ENCODE measurements at regions of chr5 and their contacts with region 1.

Region 1: GRCh38 chr5:90873033-90873517 is 314.5 kb downstream of the ADGRV1 start:
- DNase-seq: peak in 7 of 9 donors; percentile 43 to 77 (median 61)
- ATAC-seq: peak; percentile 75
- H3K4me3 ChIP-seq: no peak overlapping the region
- H3K4me3 Mint-ChIP-seq: peak overlapping the region in 9 of 10 donors; percentile 21 to 75 (median 55)
- H3K27ac ChIP-seq: peak overlapping the region; percentile 20
- H3K27ac Mint-ChIP-seq: peak overlapping the region in 8 of 9 donors; percentile 44 to 87 (median 72)
- H3K4me1 ChIP-seq: peaks cover 0 to 22% of the 10 kb centered on the region in 2 donors
- H3K4me1 Mint-ChIP-seq: peaks cover 6 to 49% (median 34%) of the 10 kb centered on the region in 7 donors
- H3K27me3 ChIP-seq: no peaks in the 10 kb centered on the region
- H3K27me3 Mint-ChIP-seq: peaks cover 0 to 41% (median 12%) of the 10 kb centered on the region in 5 donors

Region 2: GRCh38 chr5:91408710-91409109 is 535.6 kb after region 1 on chr5:
- CTCF ChIA-PET with region 1: no interaction called
- POLR2A ChIA-PET with region 1: no interaction called
- intact Hi-C with region 1: loop called in 1 of 2 experiments (anchors 5 kb)
- DNase-seq: no peak
- ATAC-seq: no peak
- H3K4me3 ChIP-seq: no peak overlapping the region
- H3K4me3 Mint-ChIP-seq: no peak overlapping the region
- H3K27ac ChIP-seq: no peak overlapping the region
- H3K27ac Mint-ChIP-seq: no peak overlapping the region
- H3K4me1 ChIP-seq: no peaks in the 10 kb centered on the region
- H3K4me1 Mint-ChIP-seq: peaks cover 0 to 4% (median 0%) of the 10 kb centered on the region in 7 donors
- H3K27me3 ChIP-seq: no peaks in the 10 kb centered on the region
- H3K27me3 Mint-ChIP-seq: no peaks in the 10 kb centered on the region

Region 3: DNA sequence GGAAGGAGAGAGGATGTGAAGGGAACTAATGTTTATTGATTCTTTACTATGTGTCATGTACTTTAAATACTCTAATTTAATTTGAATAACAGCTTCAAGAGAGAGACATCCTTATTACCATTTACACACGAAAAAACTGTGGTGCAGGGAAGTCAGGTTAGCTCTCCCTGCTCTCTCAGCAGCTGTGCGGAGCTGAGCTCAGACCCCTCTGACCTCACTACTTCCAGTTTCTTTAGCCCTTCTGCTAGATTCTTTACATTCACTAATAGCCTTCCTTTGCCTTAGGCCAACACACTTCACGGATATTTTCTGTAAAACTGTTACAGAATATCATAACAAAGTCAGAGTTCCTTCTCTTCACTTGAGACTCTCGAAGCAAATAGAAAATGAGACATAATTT is 641.3 kb after region 1 on chr5:
- CTCF ChIA-PET with region 1: no interaction called
- POLR2A ChIA-PET with region 1: no interaction called
- intact Hi-C with region 1: no loop called
- DNase-seq: no peak
- ATAC-seq: no peak
- H3K4me3 ChIP-seq: no peak overlapping the region
- H3K4me3 Mint-ChIP-seq: no peak overlapping the region
- H3K27ac ChIP-seq: no peak overlapping the region
- H3K27ac Mint-ChIP-seq: peak overlapping the region in 1 of 9 donors; percentile 76
- H3K4me1 ChIP-seq: no peaks in the 10 kb centered on the region
- H3K4me1 Mint-ChIP-seq: peaks cover 0 to 10% (median 3%) of the 10 kb centered on the region in 7 donors
- H3K27me3 ChIP-seq: no peaks in the 10 kb centered on the region
- H3K27me3 Mint-ChIP-seq: peaks cover 0 to 6% (median 0%) of the 10 kb centered on the region in 5 donors

Measured in naive thymus-derived CD4-positive, alpha-beta T cell (primary cell).